Heart right ventricle (tissue), 16 donors: ENCODE measurements at regions of chr20 and their contacts with region 1.

Region 1: DNA sequence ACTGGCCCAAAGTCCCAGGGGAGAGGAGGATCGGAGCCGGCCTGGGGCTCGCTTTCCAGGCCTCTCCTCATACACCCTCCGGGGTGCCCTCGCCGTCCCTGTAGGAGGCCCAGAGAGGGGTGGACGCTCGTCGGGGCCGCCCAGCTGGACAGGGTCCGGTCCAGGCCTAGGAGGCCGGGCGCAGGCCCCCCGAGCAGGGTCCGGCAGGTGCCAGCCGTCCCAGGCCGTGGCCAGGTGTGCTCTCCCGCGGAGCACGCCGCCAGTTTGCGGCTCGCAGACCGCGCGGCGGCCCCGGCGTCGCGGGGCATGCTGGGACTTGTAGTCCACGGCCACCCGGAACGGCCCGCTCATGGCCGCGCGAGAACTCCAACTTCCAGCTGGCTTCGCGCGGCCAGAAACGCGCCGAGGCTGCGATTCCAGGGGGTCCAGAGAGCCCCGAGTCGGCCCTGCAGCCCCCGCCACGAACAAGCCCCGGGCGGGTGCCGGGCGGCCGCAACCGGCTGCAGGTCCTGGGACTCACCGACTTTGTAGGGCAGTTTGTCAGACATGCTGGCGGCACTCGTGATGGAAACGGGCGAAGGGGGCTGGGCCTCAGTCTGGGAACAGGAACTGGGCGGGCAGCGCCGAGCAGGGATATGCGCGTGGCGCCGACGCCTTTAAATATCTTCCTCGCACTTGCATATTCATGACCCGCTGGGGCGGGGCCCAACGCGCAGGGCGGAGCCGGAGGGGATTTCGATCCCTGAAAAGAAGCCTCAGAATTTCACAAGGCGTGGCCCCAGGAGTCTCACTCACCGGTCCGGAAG is at the start of gene AHCY:
- DNase-seq: peak; percentile 95
- ATAC-seq: peak; percentile 96 to 98 (median 97)
- H3K4me3 ChIP-seq: peak within 1 kb of the TSS; percentile 65 to 98 (median 82)
- H3K27ac ChIP-seq: peak within 1 kb of the TSS; percentile 79 to 97 (median 90)
- H3K4me1 ChIP-seq: peaks cover 0 to 42% (median 23%) of the 10 kb centered on the region in 9 donors
- H3K27me3 ChIP-seq: no peaks in the 10 kb centered on the region
- CTCF ChIP-seq: peak in 5 of 9 donors; percentile 2 to 32 (median 21)
- total RNA-seq, gene AHCY: 42.3 to 83.9 (median 54.7) TPM

Region 2: DNA sequence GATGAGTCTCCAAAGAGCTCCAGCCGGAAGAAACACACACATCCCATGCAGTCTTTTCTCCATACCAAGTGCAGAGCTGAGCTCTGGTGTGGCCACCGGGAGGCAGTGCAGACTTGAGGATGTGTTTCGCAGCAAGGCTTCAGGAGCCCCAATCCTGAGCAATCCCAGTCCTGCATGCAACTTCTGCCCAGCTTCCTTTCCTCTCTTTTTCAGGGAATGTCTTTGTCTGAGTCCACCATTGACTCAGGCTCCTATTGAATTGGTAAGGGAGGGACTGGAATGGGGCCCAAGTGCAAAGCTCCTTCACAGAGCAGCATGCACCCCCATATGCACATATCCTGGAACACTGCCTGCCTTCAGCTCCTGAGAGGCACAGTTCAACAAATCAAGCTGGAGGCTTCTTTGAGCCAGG is 112.2 kb before region 1 on chr20:
- intact Hi-C with region 1: loop called in 2 of 10 experiments (anchors 5 kb)
- DNase-seq: peak; percentile 40 to 52
- ATAC-seq: peak; percentile 82 to 96 (median 91)
- H3K4me3 ChIP-seq: no peak overlapping the region
- H3K27ac ChIP-seq: no peak overlapping the region
- H3K4me1 ChIP-seq: peaks cover 0 to 9% (median 0%) of the 10 kb centered on the region in 9 donors
- H3K27me3 ChIP-seq: peaks cover 0 to 7% (median 0%) of the 10 kb centered on the region in 7 donors
- CTCF ChIP-seq: peak; percentile 38 to 77 (median 66)

Region 3: DNA sequence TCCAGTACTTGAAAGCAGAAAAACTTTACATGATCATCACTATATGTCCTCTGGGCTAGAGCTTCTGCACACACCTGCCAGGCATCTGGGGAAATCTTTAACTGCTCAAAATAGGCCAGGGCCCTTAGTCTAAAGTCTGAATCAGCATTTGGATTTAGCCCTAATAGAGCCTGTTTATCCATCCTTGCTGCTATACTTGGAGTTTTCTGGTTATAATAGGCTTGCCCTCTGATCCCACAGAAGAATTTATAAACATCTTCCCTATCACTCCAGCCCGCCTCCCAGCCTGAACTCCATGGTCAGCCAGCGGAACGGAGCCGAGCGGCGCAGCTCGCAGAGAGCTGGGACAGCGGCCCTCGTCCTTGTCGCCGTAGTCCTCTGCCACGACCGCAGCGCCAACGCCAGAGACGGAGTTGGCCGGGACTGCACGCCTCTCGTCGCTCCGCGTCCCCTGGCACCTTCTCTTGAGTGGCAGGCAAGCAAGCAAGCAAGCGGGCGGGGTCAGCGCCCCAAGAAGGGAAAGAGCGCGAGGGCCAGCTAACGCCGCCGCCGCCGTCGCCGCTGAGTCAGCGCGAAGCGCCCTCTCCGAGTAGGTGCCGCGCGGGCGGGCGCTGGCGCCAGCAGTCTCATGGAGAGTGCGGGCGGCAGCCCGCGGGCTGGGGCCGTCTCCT is 87.1 kb before region 1 on chr20:
- intact Hi-C with region 1: no loop called
- DNase-seq: peak; percentile 83 to 85
- ATAC-seq: peak; percentile 93 to 99 (median 98)
- H3K4me3 ChIP-seq: peak overlapping the region; percentile 6 to 61 (median 53)
- H3K27ac ChIP-seq: peak overlapping the region in 9 of 10 donors; percentile 53 to 82 (median 75)
- H3K4me1 ChIP-seq: peaks cover 0 to 17% (median 6%) of the 10 kb centered on the region in 9 donors
- H3K27me3 ChIP-seq: peaks cover 0 to 33% (median 4%) of the 10 kb centered on the region in 7 donors
- CTCF ChIP-seq: peak in 2 of 9 donors; percentile 9 to 29

Region 4: DNA sequence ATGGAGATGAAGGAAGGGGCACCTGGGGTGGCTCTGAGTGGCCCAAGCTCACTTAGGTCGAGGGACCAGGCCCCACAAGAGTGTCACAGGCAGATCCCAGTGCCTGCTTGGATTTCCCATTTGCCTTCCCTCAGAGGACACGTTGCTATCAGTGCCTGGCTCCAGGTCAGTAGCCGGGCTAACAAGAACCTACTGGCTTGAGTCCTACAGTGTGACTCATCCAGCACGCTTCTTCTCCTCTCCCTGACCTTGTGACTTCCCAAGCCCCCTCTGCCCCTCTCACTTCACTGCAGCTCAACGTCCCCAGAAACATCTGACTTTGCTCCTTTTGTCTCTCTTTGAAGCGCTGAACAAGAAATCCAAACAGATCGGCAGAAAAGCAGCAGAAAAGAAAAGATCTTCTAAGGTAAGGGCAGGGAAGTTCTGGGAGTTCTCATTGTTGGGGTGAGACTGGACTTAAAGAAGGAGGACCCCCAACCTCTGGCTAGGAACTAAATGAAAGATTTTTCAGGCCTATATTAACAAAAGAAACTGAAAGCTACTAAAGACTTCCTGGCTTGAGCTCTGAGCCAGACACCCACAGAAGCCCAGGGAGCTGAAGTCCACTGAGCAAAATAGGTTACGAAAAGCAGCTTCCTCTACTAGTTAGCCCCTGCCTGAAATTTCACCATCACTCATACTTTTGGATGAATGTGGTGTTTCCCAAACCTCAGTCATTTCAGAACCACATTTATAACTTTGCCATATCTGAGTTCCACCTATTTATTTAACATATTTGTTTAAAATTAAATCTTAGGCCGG is 40.2 kb before region 1 on chr20:
- intact Hi-C with region 1: loop called in 1 of 10 experiments (anchors 5 kb)
- DNase-seq: peak; percentile 43 to 64
- ATAC-seq: peak; percentile 91 to 97 (median 94)
- H3K4me3 ChIP-seq: peak overlapping the region in 6 of 10 donors; percentile 2 to 34 (median 20)
- H3K27ac ChIP-seq: peak overlapping the region; percentile 51 to 93 (median 74)
- H3K4me1 ChIP-seq: peaks cover 5 to 19% (median 14%) of the 10 kb centered on the region in 9 donors
- H3K27me3 ChIP-seq: no peaks in the 10 kb centered on the region
- CTCF ChIP-seq: no peak

Region 5: GRCh38 chr20:34522969-34523871 is 220.3 kb after region 1 on chr20:
- intact Hi-C with region 1: loop called in 1 of 10 experiments (anchors 5 kb)
- DNase-seq: no peak
- ATAC-seq: peak in 7 of 8 donors; percentile 12 to 57 (median 36)
- H3K4me3 ChIP-seq: no peak overlapping the region
- H3K27ac ChIP-seq: peak overlapping the region in 6 of 10 donors; percentile 7 to 57 (median 38)
- H3K4me1 ChIP-seq: peaks cover 13 to 89% (median 60%) of the 10 kb centered on the region in 9 donors
- H3K27me3 ChIP-seq: no peaks in the 10 kb centered on the region
- CTCF ChIP-seq: peak in 8 of 9 donors; percentile 21 to 63 (median 52)